ENCODE measurements at regions of chr5 and their contacts with region 1.

Region 1: DNA sequence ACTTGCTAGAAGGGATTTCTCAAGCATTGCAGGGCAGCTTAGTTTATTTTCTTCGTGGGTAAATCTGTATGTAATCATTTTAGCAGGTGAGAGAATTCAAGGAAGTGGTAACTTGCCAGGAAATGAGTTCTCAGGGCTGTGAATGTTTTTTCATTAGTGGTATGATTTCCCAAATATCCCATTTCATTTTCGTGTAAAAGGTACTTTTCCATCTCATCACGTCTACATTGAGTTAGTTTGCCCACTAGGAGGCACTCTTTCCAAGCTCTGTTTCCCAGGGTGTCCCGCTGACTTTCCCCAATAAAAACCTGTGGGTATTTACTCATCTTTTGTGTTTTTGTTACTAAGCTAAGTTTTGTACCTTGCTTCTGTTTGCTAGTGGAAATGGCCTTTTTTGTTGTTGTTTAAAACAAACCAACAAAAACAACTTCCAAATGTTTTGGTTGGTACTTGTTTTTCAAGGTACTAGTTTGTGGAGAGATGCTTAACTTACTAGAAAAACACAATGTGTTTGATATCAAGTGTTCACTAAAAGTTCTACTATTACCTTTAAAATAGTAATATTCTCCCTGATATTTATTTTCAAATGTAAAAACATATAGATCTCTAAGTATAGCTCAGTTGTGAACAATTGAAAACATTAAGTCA is 373.6 kb downstream of the ADGRV1 start:
- DNase-seq: peak; percentile 26
- H3K4me3 ChIP-seq: no peak overlapping the region
- H3K27ac ChIP-seq: no peak overlapping the region
- H3K27me3 ChIP-seq: no peaks in the 10 kb centered on the region
- CTCF ChIP-seq: peak; percentile 88

Region 2: DNA sequence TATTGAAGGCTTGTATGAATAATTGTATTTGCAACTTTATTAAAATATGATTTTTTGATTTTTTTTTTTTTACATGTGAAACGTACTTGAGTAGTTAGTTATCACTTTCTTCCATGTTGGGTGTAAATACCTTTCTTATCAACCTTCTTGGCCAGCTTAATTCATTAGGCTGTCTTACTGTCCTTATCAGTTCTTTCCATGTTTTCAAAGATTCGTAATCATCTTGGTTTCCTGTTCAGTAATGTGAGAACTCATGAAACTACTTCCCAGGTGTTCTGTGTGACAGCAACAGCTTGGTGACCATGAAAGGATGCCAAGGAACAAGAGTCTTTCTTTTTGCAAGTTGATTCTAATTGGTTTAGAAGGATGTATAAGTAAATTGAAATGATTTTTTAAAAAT is 273.6 kb before region 1 on chr5:
- CTCF ChIA-PET with region 1: no interaction called
- POLR2A ChIA-PET with region 1: no interaction called
- DNase-seq: no peak
- H3K4me3 ChIP-seq: no peak overlapping the region
- H3K27ac ChIP-seq: no peak overlapping the region
- H3K27me3 ChIP-seq: no peaks in the 10 kb centered on the region
- CTCF ChIP-seq: no peak

Region 3: GRCh38 chr5:90909101-90909503 is 23.1 kb before region 1 on chr5:
- CTCF ChIA-PET with region 1: interaction called, 12 read pairs
- POLR2A ChIA-PET with region 1: no interaction called
- DNase-seq: peak; percentile 6
- H3K4me3 ChIP-seq: no peak overlapping the region
- H3K27ac ChIP-seq: no peak overlapping the region
- H3K27me3 ChIP-seq: no peaks in the 10 kb centered on the region
- CTCF ChIP-seq: no peak

Region 4: DNA sequence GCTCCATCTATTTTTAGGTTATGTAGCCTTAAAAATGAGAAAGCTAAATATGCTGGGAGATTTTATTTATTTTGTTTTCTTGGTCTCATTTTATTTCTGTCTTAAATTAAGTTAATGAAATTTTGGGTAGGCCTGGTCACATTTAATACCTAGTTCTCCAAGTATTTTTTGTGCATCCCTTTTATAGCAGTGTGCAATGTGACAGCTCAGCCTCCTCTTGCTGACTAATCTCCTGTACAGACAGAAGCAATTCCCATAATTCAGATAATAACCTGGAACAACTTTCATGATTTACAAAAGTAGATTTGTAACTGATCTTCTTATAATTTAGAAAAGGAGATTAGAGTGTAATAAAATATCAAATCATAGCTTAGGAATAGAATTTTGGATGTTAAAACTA is 30.3 kb after region 1 on chr5:
- CTCF ChIA-PET with region 1: interaction called, 11 read pairs
- POLR2A ChIA-PET with region 1: no interaction called
- DNase-seq: no peak
- H3K4me3 ChIP-seq: no peak overlapping the region
- H3K27ac ChIP-seq: no peak overlapping the region
- H3K27me3 ChIP-seq: no peaks in the 10 kb centered on the region
- CTCF ChIP-seq: no peak

Region 5: DNA sequence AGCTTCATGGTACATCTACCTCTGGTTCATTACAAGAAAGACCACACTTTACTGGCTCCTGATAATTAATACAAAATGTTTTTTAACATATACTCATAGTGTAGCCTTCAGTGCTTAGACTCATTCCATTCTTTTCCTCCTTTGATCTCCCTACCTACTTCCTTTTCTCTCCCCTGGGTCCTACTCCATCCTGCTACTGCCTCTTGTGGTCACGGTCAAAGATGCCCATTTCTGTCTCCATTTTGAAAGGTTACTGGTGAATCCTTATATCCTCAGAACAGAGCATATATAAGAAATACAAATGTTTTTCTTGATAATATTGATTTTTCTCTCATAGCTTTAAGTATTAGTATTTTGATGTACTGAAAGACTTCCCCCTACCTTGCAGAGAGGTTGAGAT is 75.1 kb after region 1 on chr5:
- CTCF ChIA-PET with region 1: interaction called, 10 read pairs
- POLR2A ChIA-PET with region 1: no interaction called
- DNase-seq: no peak
- H3K4me3 ChIP-seq: no peak overlapping the region
- H3K27ac ChIP-seq: no peak overlapping the region
- H3K27me3 ChIP-seq: no peaks in the 10 kb centered on the region
- CTCF ChIP-seq: no peak

Region 6: DNA sequence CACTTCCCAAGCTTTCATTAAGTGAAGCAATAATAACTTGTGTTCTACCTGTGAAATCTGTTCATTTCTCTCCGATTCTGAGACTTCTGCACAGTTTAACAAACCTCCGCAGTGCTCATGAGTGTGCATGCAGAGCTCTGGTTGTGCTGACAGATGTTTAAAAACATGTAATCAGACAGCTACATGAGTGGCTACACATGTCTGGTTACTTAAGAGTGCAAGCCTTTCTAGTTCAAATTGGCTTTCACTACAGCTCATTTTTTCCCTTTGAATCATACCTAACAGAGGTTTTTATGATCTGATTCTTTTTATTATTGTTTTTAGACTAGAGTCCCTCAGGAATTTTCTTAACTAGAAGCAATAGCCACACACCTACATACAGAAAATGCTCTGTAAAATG is 140.7 kb after region 1 on chr5:
- CTCF ChIA-PET with region 1: interaction called, 15 read pairs
- POLR2A ChIA-PET with region 1: no interaction called
- DNase-seq: peak; percentile 49
- H3K4me3 ChIP-seq: no peak overlapping the region
- H3K27ac ChIP-seq: no peak overlapping the region
- H3K27me3 ChIP-seq: no peaks in the 10 kb centered on the region
- CTCF ChIP-seq: no peak

Region 7: GRCh38 chr5:91403438-91403837 is 471.3 kb after region 1 on chr5:
- CTCF ChIA-PET with region 1: interaction called, 18 read pairs
- POLR2A ChIA-PET with region 1: no interaction called
- DNase-seq: peak; percentile 36
- H3K4me3 ChIP-seq: no peak overlapping the region
- H3K27ac ChIP-seq: no peak overlapping the region
- H3K27me3 ChIP-seq: no peaks in the 10 kb centered on the region
- CTCF ChIP-seq: no peak

Region 8: DNA sequence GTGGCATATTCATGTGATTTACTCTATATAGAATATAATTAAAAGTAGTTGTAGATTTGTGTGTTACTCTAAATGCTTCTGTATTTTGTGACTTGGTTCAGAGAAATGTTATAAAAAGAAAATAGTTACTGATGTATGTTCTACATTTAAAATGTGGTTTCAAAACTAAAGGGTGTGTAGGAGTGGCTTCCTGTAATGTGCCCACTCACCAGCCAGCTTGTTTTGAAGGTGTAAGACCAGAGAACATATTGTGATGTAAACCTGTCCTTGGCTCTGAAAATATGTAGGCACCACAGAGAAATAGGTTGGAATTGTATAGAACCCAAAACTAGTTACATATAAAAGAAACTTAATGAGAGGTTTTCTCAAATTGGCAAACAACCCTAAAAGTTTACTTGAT is 502.2 kb after region 1 on chr5:
- CTCF ChIA-PET with region 1: interaction called, 13 read pairs
- POLR2A ChIA-PET with region 1: no interaction called
- DNase-seq: no peak
- H3K4me3 ChIP-seq: no peak overlapping the region
- H3K27ac ChIP-seq: no peak overlapping the region
- H3K27me3 ChIP-seq: no peaks in the 10 kb centered on the region
- CTCF ChIP-seq: no peak